H1 (cell line): ENCODE measurements at regions of chr18 and their contacts with region 1.

Region 1: GRCh38 chr18:12726774-12727550 is 24.1 kb downstream of the PSMG2 start:
- DNase-seq: peak; percentile 44 to 85
- H3K4me3 ChIP-seq: 0 out of 8 replicates have a peak overlapping the region, but pooled peaks of 1 of the 4 experiments have one; percentile 0
- H3K27ac ChIP-seq: no peak overlapping the region
- H3K4me1 ChIP-seq: no peaks in the 10 kb centered on the region
- H3K27me3 ChIP-seq: no peaks in the 10 kb centered on the region
- CTCF ChIP-seq: peak; percentile 55 to 84 (median 80)
- EP300 ChIP-seq: no peak
- POLR2A ChIP-seq: no peak
- RAD21 ChIP-seq: peak; percentile 91 to 93

Region 2: DNA sequence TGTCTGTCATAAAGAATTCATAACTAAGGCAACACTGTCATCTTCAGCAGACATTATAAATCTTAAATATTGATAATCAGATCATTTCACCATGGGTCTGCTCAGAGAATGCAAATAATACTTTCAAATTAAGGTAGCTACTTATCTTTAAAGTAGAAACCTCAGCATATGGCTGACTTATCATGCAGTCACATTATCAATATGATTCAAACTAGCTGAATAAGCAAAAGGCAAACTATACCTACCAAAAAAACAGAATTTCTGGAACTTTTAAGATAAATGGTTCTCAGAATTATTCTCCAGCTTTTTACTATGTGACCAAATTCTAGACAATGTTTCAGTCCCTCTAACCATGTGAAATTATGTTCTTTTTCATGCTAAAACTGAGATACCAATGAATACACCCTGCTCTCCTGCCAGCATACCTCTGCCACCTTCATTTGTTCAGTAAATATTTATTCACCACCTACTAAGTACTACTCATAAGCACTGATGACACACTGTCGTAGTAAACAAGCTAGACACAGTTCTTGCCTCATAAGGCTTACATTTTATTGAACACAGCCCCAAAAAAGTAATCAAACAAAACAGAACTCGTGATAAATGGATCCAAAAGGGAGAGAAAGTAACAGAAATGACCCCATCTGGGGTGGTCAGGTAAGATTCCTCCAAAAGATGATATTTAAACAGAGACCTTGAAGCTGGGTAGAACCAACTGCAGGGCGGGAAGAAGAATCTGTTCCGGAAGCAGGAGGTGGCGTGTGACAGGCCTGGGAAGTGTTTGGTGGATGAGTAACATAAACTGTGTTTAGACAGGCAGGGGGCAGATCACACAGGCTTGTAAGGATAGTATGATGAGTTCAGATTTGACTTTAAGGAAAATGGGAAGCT is 86.7 kb before region 1 on chr18:
- CTCF ChIA-PET with region 1: no interaction called
- POLR2A ChIA-PET with region 1: no interaction called
- DNase-seq: no peak
- H3K4me3 ChIP-seq: no peak overlapping the region
- H3K27ac ChIP-seq: no peak overlapping the region
- H3K4me1 ChIP-seq: no peaks in the 10 kb centered on the region; a peak in 1 of 7 replicates
- H3K27me3 ChIP-seq: no peaks in the 10 kb centered on the region
- CTCF ChIP-seq: no peak
- EP300 ChIP-seq: no peak
- POLR2A ChIP-seq: no peak
- RAD21 ChIP-seq: no peak

Region 3: GRCh38 chr18:12686100-12686499 is 40.9 kb before region 1 on chr18:
- CTCF ChIA-PET with region 1: no interaction called
- POLR2A ChIA-PET with region 1: no interaction called
- DNase-seq: no peak
- H3K4me3 ChIP-seq: no peak overlapping the region
- H3K27ac ChIP-seq: no peak overlapping the region
- H3K4me1 ChIP-seq: no peaks in the 10 kb centered on the region
- H3K27me3 ChIP-seq: no peaks in the 10 kb centered on the region
- CTCF ChIP-seq: no peak
- EP300 ChIP-seq: no peak
- POLR2A ChIP-seq: no peak
- RAD21 ChIP-seq: peak in 1 of 2 experiments; percentile 16; a peak in 1 of 4 replicates

Region 4: GRCh38 chr18:12737243-12737902 is 10.4 kb after region 1 on chr18:
- CTCF ChIA-PET with region 1: interaction called, 18 read pairs
- POLR2A ChIA-PET with region 1: no interaction called
- DNase-seq: no peak
- H3K4me3 ChIP-seq: no peak overlapping the region
- H3K27ac ChIP-seq: no peak overlapping the region
- H3K4me1 ChIP-seq: no peaks in the 10 kb centered on the region; a peak in 1 of 7 replicates
- H3K27me3 ChIP-seq: no peaks in the 10 kb centered on the region; a peak in 1 of 7 replicates
- CTCF ChIP-seq: no peak
- EP300 ChIP-seq: no peak
- POLR2A ChIP-seq: no peak
- RAD21 ChIP-seq: no peak; a peak in 1 of 4 replicates

Region 5: DNA sequence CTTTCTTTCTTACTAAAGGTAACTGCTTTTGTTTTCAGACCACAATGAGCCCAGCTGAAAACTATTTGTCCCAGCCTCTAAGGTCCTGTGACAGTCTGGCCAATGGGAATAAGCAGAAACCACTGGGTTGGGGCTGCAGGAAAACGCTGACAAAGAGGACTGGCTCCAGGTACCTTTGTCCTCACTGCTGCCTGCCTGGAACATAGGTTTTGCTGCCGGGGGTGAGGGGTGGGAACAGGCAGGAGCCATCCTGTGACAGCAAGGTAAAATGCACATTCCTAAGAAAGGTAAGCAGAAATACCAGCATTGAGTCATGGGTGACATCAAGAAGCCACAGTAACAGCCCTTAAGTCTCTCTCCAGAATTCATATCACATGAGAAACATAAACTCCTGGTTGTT is 135.5 kb after region 1 on chr18:
- CTCF ChIA-PET with region 1: no interaction called
- POLR2A ChIA-PET with region 1: no interaction called
- DNase-seq: peak; percentile 66 to 82
- H3K4me3 ChIP-seq: no peak overlapping the region; a peak in 1 of 8 replicates
- H3K27ac ChIP-seq: no peak overlapping the region
- H3K4me1 ChIP-seq: peaks cover 0 to 12% (median 5%) of the 10 kb centered on the region in 4 experiments; a peak in 5 of 7 replicates
- H3K27me3 ChIP-seq: no peaks in the 10 kb centered on the region
- CTCF ChIP-seq: no peak
- EP300 ChIP-seq: no peak
- POLR2A ChIP-seq: no peak
- RAD21 ChIP-seq: no peak; a peak in 1 of 4 replicates

Region 6: GRCh38 chr18:13036622-13037320 is 309.8 kb after region 1 on chr18:
- CTCF ChIA-PET with region 1: no interaction called
- POLR2A ChIA-PET with region 1: no interaction called
- DNase-seq: no peak
- H3K4me3 ChIP-seq: no peak overlapping the region
- H3K27ac ChIP-seq: no peak overlapping the region
- H3K4me1 ChIP-seq: no peaks in the 10 kb centered on the region
- H3K27me3 ChIP-seq: no peaks in the 10 kb centered on the region
- CTCF ChIP-seq: no peak
- EP300 ChIP-seq: no peak
- POLR2A ChIP-seq: no peak
- RAD21 ChIP-seq: no peak